ENCODE measurements at regions of chr9 and their contacts with region 1.

Region 1: GRCh38 chr9:33151007-33151557 is 16.1 kb downstream of the B4GALT1 start:
- DNase-seq: peak; percentile 86
- H3K4me3 ChIP-seq: no peak overlapping the region
- H3K27ac ChIP-seq: peak overlapping the region; percentile 53
- H3K4me1 ChIP-seq: peaks cover 33% of the 10 kb centered on the region
- H3K27me3 ChIP-seq: no peaks in the 10 kb centered on the region
- CTCF ChIP-seq: no peak
- POLR2A ChIP-seq: no peak

Region 2: DNA sequence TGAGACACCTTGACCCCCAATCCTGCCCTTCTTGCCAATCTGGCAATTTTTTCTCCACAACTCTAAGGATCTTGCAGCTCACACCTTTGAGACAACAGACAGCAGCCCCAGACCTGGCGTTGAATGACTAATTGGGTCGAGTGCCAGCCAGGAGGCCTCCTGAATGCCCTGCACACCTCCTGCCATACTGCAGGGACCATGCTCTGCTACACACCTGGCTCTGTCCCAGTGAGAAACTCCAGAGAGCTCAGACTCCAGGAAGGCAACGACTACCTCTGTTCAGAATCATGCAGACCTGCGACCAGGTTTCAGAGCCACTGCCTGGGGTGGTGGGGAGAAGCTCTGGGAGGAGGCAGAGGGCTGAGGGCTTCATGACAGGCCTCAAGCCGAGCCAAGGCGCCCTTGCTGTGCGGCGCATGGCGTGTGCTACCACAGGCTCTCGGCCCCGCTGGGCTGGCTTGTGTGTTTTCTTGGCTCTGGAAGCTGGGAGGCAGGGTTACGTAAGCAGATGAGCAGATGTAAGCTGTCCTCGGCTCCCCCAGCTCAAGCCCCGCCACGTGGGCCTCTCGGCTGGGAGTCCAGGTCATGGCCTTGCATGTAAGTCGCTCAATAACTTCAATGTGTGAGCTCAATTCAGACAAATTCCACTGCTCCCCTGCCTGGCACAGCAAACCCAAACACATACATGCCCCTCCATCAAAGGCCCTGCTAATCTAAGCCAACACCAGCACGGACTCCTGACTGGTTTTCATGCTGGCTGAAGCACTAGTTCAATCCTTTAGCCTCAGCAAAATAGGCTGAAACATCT is 11.5 kb before region 1 on chr9:
- CTCF ChIA-PET with region 1: interaction called, 15 read pairs
- POLR2A ChIA-PET with region 1: no interaction called
- dilution Hi-C with region 1: no loop called
- intact Hi-C with region 1: no loop called
- DNase-seq: no peak
- H3K4me3 ChIP-seq: no peak overlapping the region
- H3K27ac ChIP-seq: no peak overlapping the region
- H3K4me1 ChIP-seq: peaks cover 12% of the 10 kb centered on the region
- H3K27me3 ChIP-seq: no peaks in the 10 kb centered on the region
- CTCF ChIP-seq: no peak
- POLR2A ChIP-seq: no peak

Measured in endothelial cell of umbilical vein (primary cell).